Right lobe of liver (tissue), 6 donors: ENCODE measurements at regions of chr15 and their contacts with region 1.

Region 1: DNA sequence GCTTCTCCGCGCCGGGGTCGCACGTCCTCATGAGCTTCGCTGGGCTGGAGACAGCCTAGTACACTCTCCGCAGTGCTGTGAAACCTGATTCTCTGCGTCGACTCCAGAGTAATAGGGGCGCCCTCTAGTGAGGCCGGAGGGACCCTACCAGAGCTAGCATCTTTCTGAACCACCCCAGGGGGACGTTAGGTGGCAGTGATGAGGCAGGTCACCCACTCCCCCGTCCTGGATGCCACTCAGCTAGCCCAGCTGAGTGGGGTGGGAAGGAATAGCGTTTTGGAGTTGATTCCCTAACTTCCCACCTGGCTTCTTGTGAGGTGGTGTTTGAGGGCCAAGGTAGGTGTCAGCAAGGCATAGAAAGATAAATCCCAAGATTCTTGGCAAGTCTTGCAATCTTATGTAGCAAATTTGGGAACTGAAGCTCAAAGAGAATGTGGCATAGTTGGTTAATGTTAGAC is 4.0 kb downstream of the DUOXA2 start:
- DNase-seq: peak; percentile 85 to 90 (median 89)
- ATAC-seq: peak; percentile 95 to 99 (median 96)
- H3K4me3 ChIP-seq: peak overlapping the region in 2 of 3 donors; percentile 16 to 24
- H3K27ac ChIP-seq: no peak overlapping the region
- H3K4me1 ChIP-seq: peaks cover 0 to 13% (median 2%) of the 10 kb centered on the region in 4 donors
- H3K27me3 ChIP-seq: peaks cover 4 to 6% of the 10 kb centered on the region in 2 donors
- CTCF ChIP-seq: peak; percentile 94 to 100 (median 99)
- POLR2A ChIP-seq: no peak

Region 2: DNA sequence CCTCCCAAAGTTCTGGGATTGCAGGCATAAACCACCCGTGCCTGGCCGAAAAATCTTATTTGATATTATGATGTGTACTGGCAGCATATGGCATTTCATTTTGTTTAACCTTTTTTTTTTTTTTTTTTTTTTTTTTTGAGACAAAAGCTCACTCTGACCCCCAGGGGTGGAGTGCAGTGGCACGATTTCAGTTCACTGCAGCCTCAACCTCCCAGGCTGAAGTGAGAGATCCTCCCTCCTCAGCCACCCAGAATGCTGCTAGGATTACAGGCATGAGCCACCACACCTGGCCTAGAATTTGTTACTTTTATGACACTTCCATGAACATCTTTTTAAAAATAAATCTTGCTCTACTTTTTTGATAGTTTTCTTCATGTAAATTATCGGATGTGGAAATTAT is 149.7 kb before region 1 on chr15:
- intact Hi-C with region 1: loop called (anchors 5 to 10 kb)
- DNase-seq: no peak
- ATAC-seq: no peak
- H3K4me3 ChIP-seq: no peak overlapping the region
- H3K27ac ChIP-seq: no peak overlapping the region
- H3K4me1 ChIP-seq: no peaks in the 10 kb centered on the region
- H3K27me3 ChIP-seq: no peaks in the 10 kb centered on the region
- CTCF ChIP-seq: no peak
- POLR2A ChIP-seq: no peak

Region 3: DNA sequence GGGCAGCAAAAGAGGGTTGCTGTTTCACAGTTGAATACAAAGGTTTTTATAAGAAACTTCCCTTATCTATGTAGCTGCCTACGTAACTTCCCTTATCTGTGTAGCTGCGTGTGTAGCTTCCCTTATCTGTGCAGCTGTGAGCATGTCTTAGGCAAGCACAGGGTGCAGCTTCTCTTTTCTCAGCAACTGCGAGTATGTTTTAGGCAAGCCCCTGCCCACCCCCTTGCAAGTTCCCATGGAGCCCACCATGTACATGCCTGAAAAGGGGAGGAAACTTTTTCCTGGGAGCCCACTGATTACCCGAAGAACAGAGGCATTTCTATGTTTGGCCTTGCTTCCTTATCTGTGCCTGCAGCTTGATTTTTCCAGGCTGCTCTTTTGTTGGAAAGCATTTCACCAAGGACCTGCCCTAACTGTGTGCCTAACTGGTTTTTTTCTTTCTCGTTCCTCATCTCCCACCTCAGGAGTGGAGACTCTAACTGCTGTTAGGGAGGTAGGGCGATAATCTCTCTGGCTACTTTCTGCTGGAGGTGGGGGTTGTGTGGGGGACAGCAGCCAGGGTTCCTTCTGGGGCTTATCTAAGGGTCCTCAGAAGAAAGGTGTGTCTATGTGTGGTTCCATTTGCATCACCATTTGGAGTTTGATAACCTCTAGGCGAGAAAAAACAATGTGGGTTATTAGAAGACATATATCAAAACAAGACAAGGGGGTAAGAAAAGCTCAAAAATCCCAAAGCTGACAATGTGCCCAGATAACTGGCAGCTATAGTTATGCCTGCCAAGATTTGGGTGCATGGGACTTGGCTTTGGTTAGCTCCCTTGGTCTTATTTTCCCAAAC is 69.1 kb before region 1 on chr15:
- intact Hi-C with region 1: no loop called
- DNase-seq: no peak
- ATAC-seq: peak; percentile 60 to 82 (median 72)
- H3K4me3 ChIP-seq: no peak overlapping the region
- H3K27ac ChIP-seq: peak overlapping the region in 1 of 3 donors; percentile 13
- H3K4me1 ChIP-seq: no peaks in the 10 kb centered on the region
- H3K27me3 ChIP-seq: no peaks in the 10 kb centered on the region
- CTCF ChIP-seq: no peak
- POLR2A ChIP-seq: no peak